GM18951 (cell line): ENCODE measurements at regions of chr12 and their contacts with region 1.

Region 1: GRCh38 chr12:113196996-113197395 is 11.5 kb downstream of the RITA1 start:
- POLR2A ChIP-seq: no peak

Region 2: GRCh38 chr12:112482733-112483132 is 714.3 kb before region 1 on chr12:
- in situ Hi-C with region 1: no loop called
- POLR2A ChIP-seq: no peak

Region 3: DNA sequence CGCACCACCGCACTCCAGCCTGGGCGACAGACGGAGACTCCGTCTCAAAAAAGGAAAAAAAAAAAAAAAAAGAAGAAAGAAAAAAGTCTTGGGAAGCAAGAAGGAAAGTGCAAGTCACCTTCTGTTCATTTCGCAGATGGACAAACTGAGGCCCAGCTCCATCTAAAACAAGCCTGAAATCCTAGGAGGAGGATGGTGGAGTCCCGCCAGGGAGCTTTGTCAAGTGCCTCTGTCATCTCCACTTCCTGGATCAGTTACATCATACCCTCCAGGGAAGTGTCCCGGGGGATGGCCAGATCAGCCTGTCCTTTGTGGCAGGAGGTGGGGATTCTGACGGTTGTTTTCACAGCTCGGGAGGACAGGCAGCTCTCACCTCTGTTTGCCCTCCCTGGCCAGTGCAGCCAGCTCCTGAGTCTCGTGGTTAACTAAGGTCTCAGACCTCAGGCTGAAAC is 216.5 kb after region 1 on chr12:
- in situ Hi-C with region 1: loop called (anchors 10 kb)
- POLR2A ChIP-seq: no peak